Left ventricle myocardium inferior (tissue), 1 donor: ENCODE measurements at regions of chr1 and their contacts with region 1.

Region 1: GRCh38 chr1:183655562-183656075 is 2.5 kb upstream of the APOBEC4 start:
- DNase-seq: peak; percentile 79
- H3K4me3 ChIP-seq: no peak overlapping the region
- H3K27ac ChIP-seq: no peak overlapping the region
- H3K4me1 ChIP-seq: peaks cover 58% of the 10 kb centered on the region
- H3K27me3 ChIP-seq: no peaks in the 10 kb centered on the region
- CTCF ChIP-seq: peak; percentile 94

Region 2: GRCh38 chr1:183685112-183685713 is 29.6 kb after region 1 on chr1:
- intact Hi-C with region 1: loop called (anchors 5 kb)
- DNase-seq: no peak
- H3K4me3 ChIP-seq: no peak overlapping the region
- H3K27ac ChIP-seq: no peak overlapping the region
- H3K4me1 ChIP-seq: peaks cover 24% of the 10 kb centered on the region
- H3K27me3 ChIP-seq: no peaks in the 10 kb centered on the region
- CTCF ChIP-seq: peak; percentile 88

Region 3: DNA sequence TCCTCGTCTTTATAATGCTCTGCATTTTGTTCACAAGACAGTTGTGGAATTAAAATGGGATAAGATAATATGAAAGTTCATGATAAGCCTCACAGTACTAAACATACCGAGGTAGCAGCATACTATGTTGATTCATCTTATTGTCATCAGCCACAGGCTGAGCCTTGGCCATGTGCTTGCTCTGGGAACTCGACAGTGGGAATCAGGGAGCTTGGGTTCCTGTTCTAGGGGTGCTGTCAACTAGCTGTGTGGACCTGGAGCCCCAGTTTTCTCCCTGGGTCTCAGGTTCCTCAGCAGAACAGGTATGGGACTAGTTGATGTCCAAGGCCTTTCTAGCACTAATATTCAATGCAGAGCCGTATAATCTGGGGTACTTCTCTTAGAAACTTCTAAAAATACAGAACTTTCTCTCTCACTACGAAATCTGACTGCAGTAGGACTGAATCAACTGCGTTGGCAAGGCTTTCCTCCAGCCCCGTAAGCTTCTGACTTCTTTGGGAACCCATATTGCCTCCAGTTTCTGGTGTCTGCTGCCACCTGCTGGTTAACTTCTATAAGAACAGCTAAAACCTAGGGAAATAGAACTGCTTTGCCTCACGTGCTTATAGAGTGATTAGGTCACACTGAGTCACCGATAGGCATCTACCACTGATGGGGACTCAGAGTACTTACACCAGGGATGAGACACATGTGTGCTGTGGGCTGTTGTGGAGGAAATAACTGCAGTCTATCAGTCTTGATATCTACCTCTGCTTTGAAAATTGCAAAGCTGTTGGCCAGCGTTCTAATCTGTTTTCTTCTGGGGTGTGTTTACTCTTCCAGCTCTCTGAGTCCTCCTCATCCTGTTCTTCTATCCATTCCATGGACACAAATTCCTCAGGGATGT is 260.2 kb after region 1 on chr1:
- intact Hi-C with region 1: loop called (anchors 5 kb)
- DNase-seq: peak; percentile 47
- H3K4me3 ChIP-seq: no peak overlapping the region
- H3K27ac ChIP-seq: peak overlapping the region; percentile 66
- H3K4me1 ChIP-seq: peaks cover 32% of the 10 kb centered on the region
- H3K27me3 ChIP-seq: no peaks in the 10 kb centered on the region
- CTCF ChIP-seq: peak; percentile 89